Aorta (tissue), 5 donors: ENCODE measurements at regions of chr11 and their contacts with region 1.

Region 1: GRCh38 chr11:72080256-72080974 is at the starts of genes LRRC51 and NUMA1:
- DNase-seq: peak; percentile 99 to 100
- ATAC-seq: peak; percentile 99
- H3K4me3 ChIP-seq: peak within 1 kb of the TSS; percentile 62 to 96
- H3K27ac ChIP-seq: peak within 1 kb of the TSS; percentile 7 to 88
- H3K4me1 ChIP-seq: no peaks in the 10 kb centered on the region
- H3K27me3 ChIP-seq: no peaks in the 10 kb centered on the region
- total RNA-seq, gene LRRC51: 6.6 to 8.5 TPM
- total RNA-seq, gene NUMA1: 150 to 241 TPM

Region 2: GRCh38 chr11:72102946-72103753 is 22.7 kb after region 1 on chr11 and contains the start of gene LAMTOR1:
- intact Hi-C with region 1: loop called (anchors 1 to 2 kb)
- DNase-seq: peak; percentile 100
- ATAC-seq: peak; percentile 99
- H3K4me3 ChIP-seq: peak within 1 kb of the TSS; percentile 63 to 70
- H3K27ac ChIP-seq: peak within 1 kb of the TSS; percentile 79 to 85
- H3K4me1 ChIP-seq: no peaks in the 10 kb centered on the region
- H3K27me3 ChIP-seq: no peaks in the 10 kb centered on the region
- total RNA-seq, gene LAMTOR1: 61.1 to 62.6 TPM

Region 3: GRCh38 chr11:72209101-72209500 is 128.7 kb after region 1 on chr11:
- intact Hi-C with region 1: no loop called
- DNase-seq: peak in 1 of 2 donors; percentile 44
- ATAC-seq: no peak
- H3K4me3 ChIP-seq: no peak overlapping the region
- H3K27ac ChIP-seq: no peak overlapping the region
- H3K4me1 ChIP-seq: no peaks in the 10 kb centered on the region
- H3K27me3 ChIP-seq: no peaks in the 10 kb centered on the region